Pancreas (tissue), 10 donors: ENCODE measurements at regions of chr1 and their contacts with region 1.

Region 1: DNA sequence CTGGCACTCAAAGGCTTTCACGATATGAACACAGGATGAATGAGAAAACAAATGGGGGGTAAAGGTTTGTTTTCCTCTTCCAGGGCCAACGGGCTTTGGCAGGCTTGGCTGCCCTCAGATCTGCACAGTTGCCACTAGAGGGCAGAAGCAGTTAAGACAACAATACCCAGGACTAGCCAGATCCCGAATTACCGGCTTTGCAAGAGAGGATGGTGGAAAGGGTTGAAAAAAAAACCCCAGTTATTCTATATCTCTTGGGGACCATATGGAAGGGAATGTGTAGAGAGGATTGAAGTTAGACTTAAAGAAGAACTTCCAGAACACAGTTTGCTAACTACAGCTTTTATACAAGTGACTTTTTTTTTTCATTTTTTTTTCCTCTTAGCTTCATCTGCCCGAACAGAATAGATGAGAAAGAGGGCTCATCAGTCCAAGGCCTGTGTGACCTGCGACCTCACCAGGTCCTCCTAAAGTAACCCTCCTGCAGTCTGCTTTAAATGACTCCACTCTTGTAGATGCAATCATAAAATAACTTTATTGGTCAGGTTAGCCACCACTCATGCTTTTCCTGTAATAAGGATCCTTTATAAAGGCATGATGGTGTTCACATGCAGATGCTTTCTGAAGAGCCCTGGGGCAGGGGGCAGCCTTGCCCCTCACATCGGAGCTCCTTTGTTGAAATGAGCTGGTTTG is 10.7 kb downstream of the FMOD start:
- DNase-seq: peak; percentile 67 to 82 (median 76)
- ATAC-seq: peak; percentile 79 to 90 (median 90)
- H3K4me3 ChIP-seq: no peak overlapping the region
- H3K27ac ChIP-seq: peak overlapping the region in 1 of 4 donors; percentile 10
- H3K4me1 ChIP-seq: peaks cover 0 to 4% (median 0%) of the 10 kb centered on the region in 3 donors
- H3K27me3 ChIP-seq: no peaks in the 10 kb centered on the region
- CTCF ChIP-seq: peak; percentile 73 to 84 (median 80)

Region 2: DNA sequence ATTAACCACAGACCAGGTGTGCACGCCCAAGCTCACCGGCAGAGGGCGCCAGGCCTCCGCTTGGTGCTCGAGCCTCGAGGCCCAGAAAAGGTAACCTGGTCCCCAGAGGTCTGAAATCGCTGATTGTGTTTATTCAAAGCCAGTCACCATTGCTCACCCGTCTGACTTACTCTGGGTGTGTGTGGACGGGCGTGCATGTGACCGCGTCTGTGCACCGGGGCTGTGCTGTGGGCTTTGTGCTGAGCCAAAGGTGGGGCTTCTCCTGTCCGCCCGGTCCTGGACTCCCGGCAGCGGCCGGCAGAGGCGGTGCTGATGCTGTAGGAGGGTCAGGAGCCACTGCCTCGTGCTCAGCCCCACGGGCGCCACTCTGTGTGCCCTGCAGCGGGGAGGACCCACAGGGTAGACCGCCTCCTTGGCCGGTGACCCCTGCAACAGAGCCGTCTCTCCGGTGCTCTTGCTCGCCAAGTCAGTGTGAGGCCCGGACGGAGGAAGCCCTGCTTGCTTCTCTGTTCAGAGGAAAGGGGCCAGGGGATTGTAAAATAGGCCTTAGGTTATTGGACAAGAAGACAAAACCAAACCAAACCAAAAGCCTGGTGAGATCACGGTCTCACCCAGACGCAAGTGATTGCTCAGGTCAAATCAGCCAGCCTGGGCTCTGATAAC is 66.9 kb before region 1 on chr1:
- intact Hi-C with region 1: loop called (anchors 5 to 10 kb)
- DNase-seq: peak; percentile 86 to 98 (median 93)
- ATAC-seq: peak; percentile 85 to 87 (median 86)
- H3K4me3 ChIP-seq: peak overlapping the region in 2 of 4 donors; percentile 10 to 40
- H3K27ac ChIP-seq: peak overlapping the region in 2 of 4 donors; percentile 50 to 62
- H3K4me1 ChIP-seq: peaks cover 4 to 23% (median 8%) of the 10 kb centered on the region in 3 donors
- H3K27me3 ChIP-seq: no peaks in the 10 kb centered on the region
- CTCF ChIP-seq: peak; percentile 94 to 97 (median 96)

Region 3: DNA sequence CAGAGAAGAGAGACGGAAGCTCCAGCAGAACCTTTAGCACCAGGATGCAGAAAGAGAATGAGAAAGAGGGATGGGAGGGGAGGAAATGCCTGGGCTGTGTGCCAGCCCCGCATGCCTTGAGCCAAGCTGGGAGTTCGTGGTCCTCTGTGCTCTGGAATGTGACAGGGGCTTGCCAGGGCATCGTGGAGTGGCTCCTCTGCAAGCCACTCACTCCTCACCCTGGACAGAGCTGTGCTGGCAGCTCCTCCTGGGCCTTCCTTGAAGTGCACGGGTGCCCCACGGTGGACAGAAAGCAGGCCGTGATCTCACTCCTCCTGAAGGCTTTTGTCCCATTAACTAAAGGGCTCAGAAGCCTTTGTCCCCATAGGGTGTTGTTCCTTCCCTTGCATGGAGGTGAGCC is 100.5 kb after region 1 on chr1:
- intact Hi-C with region 1: loop called in 1 of 3 experiments (anchors 10 kb)
- DNase-seq: peak in 4 of 6 donors; percentile 16 to 73 (median 36)
- ATAC-seq: peak; percentile 28 to 86 (median 82)
- H3K4me3 ChIP-seq: no peak overlapping the region
- H3K27ac ChIP-seq: no peak overlapping the region
- H3K4me1 ChIP-seq: no peaks in the 10 kb centered on the region
- H3K27me3 ChIP-seq: no peaks in the 10 kb centered on the region
- CTCF ChIP-seq: peak in 1 of 4 donors; percentile 15

Region 4: GRCh38 chr1:203480525-203481084 is 140.3 kb after region 1 on chr1:
- intact Hi-C with region 1: loop called in 2 of 3 experiments (anchors 5 to 10 kb)
- DNase-seq: peak in 3 of 6 donors; percentile 29 to 85 (median 84)
- ATAC-seq: peak; percentile 41 to 77 (median 68)
- H3K4me3 ChIP-seq: no peak overlapping the region
- H3K27ac ChIP-seq: peak overlapping the region in 1 of 4 donors; percentile 46
- H3K4me1 ChIP-seq: no peaks in the 10 kb centered on the region
- H3K27me3 ChIP-seq: no peaks in the 10 kb centered on the region
- CTCF ChIP-seq: no peak

Region 5: GRCh38 chr1:203486618-203487370 is 146.5 kb after region 1 on chr1:
- intact Hi-C with region 1: loop called (anchors 2 to 10 kb)
- DNase-seq: no peak
- ATAC-seq: peak in 2 of 4 donors; percentile 5
- H3K4me3 ChIP-seq: peak overlapping the region in 1 of 4 donors; percentile 49
- H3K27ac ChIP-seq: peak overlapping the region in 2 of 4 donors; percentile 22 to 30
- H3K4me1 ChIP-seq: peaks cover 0 to 6% (median 5%) of the 10 kb centered on the region in 3 donors
- H3K27me3 ChIP-seq: no peaks in the 10 kb centered on the region
- CTCF ChIP-seq: no peak